GM12878 (cell line): ENCODE measurements at regions of chr4 and their contacts with region 1.

Region 1: DNA sequence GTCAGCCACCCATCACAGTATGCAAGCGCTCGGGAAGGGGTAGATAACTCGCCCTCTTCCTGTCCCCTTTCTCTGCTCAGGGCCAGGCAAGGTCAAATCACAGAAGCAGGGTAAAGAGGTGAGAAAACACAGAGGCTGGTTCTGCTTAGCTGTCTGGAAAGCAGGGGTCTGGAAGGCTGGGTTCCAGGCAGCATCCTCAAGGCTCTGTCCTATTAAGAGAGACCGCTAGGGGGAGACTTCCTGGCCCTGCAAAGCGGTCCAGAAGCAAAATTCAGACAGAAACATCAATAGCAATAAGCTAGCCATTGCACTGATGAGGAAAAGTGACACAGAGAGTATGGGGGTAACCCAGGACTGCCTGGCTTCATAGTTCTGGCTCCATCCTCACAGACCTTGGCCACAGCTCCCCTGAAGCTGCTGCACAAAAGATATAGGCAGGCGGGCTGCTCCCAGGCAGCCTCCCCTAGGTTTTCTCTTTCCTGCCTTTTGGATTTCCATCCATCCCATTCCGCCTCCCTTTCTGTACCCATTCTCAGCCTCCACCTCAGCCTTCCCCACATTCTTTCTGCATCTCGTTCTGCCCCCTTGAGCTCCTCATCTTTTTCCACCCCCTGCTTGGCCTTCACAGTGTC is 308.5 kb downstream of the EVC2 start:
- DNase-seq: no peak
- ATAC-seq: peak; percentile 70
- H3K4me3 ChIP-seq: no peak overlapping the region
- H3K27ac ChIP-seq: no peak overlapping the region
- H3K4me1 ChIP-seq: no peaks in the 10 kb centered on the region
- H3K27me3 ChIP-seq: no peaks in the 10 kb centered on the region
- CTCF ChIP-seq: peak; percentile 54 to 66 (median 62)
- EP300 ChIP-seq: no peak
- POLR2A ChIP-seq: no peak
- RAD21 ChIP-seq: peak; percentile 57

Region 2: GRCh38 chr4:4995103-4995907 is 404.6 kb before region 1 on chr4:
- CTCF ChIA-PET with region 1: no interaction called
- POLR2A ChIA-PET with region 1: no interaction called
- RAD21 ChIA-PET with region 1: no interaction called
- SMC1A ChIA-PET with region 1: no interaction called
- in situ Hi-C with region 1: no loop called
- intact Hi-C with region 1: loop called (anchors 10 kb)
- DNase-seq: no peak
- ATAC-seq: peak; percentile 94
- H3K4me3 ChIP-seq: no peak overlapping the region
- H3K27ac ChIP-seq: no peak overlapping the region
- H3K4me1 ChIP-seq: no peaks in the 10 kb centered on the region
- H3K27me3 ChIP-seq: no peaks in the 10 kb centered on the region
- CTCF ChIP-seq: peak; percentile 85 to 93 (median 91)
- EP300 ChIP-seq: no peak
- POLR2A ChIP-seq: no peak
- RAD21 ChIP-seq: peak; percentile 80

Region 3: DNA sequence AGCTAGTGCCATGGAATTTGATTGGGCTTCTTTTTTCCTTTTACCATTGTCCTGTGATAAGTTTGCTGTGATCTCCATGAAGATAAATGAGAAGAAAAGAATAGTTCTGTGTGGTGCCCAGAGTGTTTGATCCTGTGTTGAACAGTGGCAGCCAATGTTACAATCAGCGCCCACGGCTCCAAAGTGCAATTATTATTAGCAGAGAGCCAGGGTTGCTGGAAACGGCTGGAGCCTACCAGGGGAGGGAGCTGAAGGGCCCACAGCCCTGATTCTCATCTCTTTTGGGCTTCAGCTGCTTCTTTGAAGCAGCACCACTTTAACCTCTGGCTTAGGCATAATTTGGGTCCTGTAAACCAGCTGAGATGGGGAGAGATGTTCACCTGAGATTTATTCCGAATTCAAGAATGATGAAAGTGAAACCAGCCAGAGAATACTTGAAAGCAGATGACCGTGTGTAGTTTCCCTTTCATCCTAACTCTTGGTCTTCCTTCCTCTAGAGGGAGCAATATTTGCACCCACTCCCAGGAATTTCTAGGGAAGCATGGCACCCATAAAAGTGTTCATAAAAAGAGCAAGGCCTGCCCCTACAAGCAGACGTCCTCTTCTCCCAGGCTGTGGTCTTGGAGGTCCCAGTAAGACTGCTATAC is 10.2 kb after region 1 on chr4:
- CTCF ChIA-PET with region 1: interaction called, 10 read pairs
- POLR2A ChIA-PET with region 1: no interaction called
- RAD21 ChIA-PET with region 1: no interaction called
- SMC1A ChIA-PET with region 1: interaction called, 7 read pairs
- in situ Hi-C with region 1: no loop called
- intact Hi-C with region 1: no loop called
- DNase-seq: no peak
- ATAC-seq: no peak
- H3K4me3 ChIP-seq: no peak overlapping the region
- H3K27ac ChIP-seq: no peak overlapping the region
- H3K4me1 ChIP-seq: no peaks in the 10 kb centered on the region
- H3K27me3 ChIP-seq: no peaks in the 10 kb centered on the region
- CTCF ChIP-seq: no peak
- EP300 ChIP-seq: no peak
- POLR2A ChIP-seq: no peak
- RAD21 ChIP-seq: no peak

Region 4: GRCh38 chr4:5710961-5711478 is 311.1 kb after region 1 on chr4 and contains the start of gene EVC:
- CTCF ChIA-PET with region 1: interaction called, 3 read pairs
- POLR2A ChIA-PET with region 1: no interaction called
- RAD21 ChIA-PET with region 1: interaction called, 3 read pairs
- SMC1A ChIA-PET with region 1: no interaction called
- in situ Hi-C with region 1: no loop called
- intact Hi-C with region 1: loop called (anchors 10 kb)
- DNase-seq: no peak
- ATAC-seq: peak; percentile 58
- H3K4me3 ChIP-seq: peak within 1 kb of the TSS; percentile 72
- H3K27ac ChIP-seq: peak within 1 kb of the TSS; percentile 78
- H3K4me1 ChIP-seq: peaks cover 3% of the 10 kb centered on the region; the same call in 1 of the 2 replicates
- H3K27me3 ChIP-seq: no peaks in the 10 kb centered on the region
- CTCF ChIP-seq: 0 out of 6 replicates have a peak, but pooled peaks of 1 of the 3 experiments have one; percentile 1
- EP300 ChIP-seq: no peak
- POLR2A ChIP-seq: no peak
- RAD21 ChIP-seq: no peak
- polyA plus RNA-seq, gene EVC: 0.87 to 1.2 TPM

Region 5: GRCh38 chr4:5789141-5789540 is 389.2 kb after region 1 on chr4:
- CTCF ChIA-PET with region 1: interaction called, 13 read pairs
- POLR2A ChIA-PET with region 1: no interaction called
- RAD21 ChIA-PET with region 1: no interaction called
- SMC1A ChIA-PET with region 1: interaction called, 3 read pairs
- in situ Hi-C with region 1: loop called (anchors 10 kb)
- intact Hi-C with region 1: no loop called
- DNase-seq: no peak
- ATAC-seq: no peak
- H3K4me3 ChIP-seq: no peak overlapping the region
- H3K27ac ChIP-seq: no peak overlapping the region
- H3K4me1 ChIP-seq: no peaks in the 10 kb centered on the region
- H3K27me3 ChIP-seq: no peaks in the 10 kb centered on the region
- CTCF ChIP-seq: no peak
- EP300 ChIP-seq: no peak
- POLR2A ChIP-seq: no peak
- RAD21 ChIP-seq: no peak

Region 6: DNA sequence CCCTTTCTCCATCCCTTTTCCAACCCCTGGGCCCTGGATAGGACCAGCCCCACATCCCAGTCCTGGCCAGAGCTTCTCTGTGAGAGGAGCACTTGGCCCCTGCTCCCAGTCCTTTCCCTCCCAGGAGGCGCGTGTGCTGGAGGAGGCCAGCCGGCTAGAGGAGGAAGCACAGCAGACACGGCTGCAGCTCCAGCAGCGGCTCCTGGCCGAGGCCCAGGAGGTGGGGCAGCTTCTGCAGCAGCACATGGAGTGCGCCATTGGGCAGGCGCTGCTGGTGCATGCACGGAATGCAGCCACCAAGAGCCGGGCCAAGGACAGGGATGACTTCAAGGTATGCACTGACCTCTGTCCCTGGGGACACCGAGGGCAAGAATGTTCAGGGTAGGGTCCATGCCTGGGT is 398.6 kb after region 1 on chr4:
- CTCF ChIA-PET with region 1: no interaction called
- POLR2A ChIA-PET with region 1: no interaction called
- RAD21 ChIA-PET with region 1: no interaction called
- SMC1A ChIA-PET with region 1: no interaction called
- in situ Hi-C with region 1: loop called (anchors 10 kb)
- intact Hi-C with region 1: no loop called
- DNase-seq: no peak
- ATAC-seq: no peak
- H3K4me3 ChIP-seq: no peak overlapping the region
- H3K27ac ChIP-seq: no peak overlapping the region
- H3K4me1 ChIP-seq: no peaks in the 10 kb centered on the region
- H3K27me3 ChIP-seq: no peaks in the 10 kb centered on the region
- CTCF ChIP-seq: no peak
- EP300 ChIP-seq: no peak
- POLR2A ChIP-seq: no peak
- RAD21 ChIP-seq: no peak

Region 7: DNA sequence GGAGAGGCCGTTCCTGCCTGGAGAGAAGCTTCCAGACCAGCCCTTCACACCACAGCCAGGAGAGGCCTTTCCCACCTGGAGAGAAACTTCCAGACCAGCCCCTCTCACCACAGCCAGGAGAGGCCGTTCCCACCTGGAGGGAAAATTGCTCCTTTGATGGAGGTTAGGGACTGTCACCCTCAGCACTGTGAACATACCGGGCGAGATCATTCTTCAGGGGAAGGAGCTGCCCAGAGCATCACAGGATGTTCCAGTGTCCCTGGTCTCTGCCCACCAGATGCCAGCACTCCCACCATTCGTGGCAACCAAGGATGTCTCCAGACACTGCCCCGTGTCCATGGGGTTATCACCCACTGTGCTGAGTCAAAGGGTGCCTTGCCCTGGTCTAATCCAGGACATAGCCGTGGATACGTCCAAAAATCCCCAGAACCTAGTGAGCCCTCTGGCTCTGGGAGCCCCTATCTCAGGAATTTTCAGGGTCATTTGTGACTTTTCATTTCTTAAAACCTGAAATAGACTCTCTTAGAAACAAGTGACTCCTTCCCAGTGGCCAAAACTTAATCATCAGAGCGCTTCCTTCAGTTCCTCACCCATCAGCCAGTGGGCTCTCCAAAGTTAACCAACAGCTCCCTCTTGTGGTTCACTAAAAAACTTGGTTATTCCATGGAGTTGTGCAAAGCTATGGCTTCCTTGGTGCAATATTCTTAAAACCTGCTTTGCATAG is 412.8 kb after region 1 on chr4:
- CTCF ChIA-PET with region 1: interaction called, 3 read pairs
- POLR2A ChIA-PET with region 1: no interaction called
- RAD21 ChIA-PET with region 1: no interaction called
- SMC1A ChIA-PET with region 1: no interaction called
- in situ Hi-C with region 1: loop called (anchors 10 kb)
- intact Hi-C with region 1: loop called (anchors 2 kb)
- DNase-seq: no peak
- ATAC-seq: peak; percentile 92
- H3K4me3 ChIP-seq: no peak overlapping the region
- H3K27ac ChIP-seq: no peak overlapping the region
- H3K4me1 ChIP-seq: no peaks in the 10 kb centered on the region
- H3K27me3 ChIP-seq: no peaks in the 10 kb centered on the region
- CTCF ChIP-seq: peak; percentile 55 to 74 (median 69); a peak in 5 of 6 replicates
- EP300 ChIP-seq: no peak
- POLR2A ChIP-seq: no peak
- RAD21 ChIP-seq: peak; percentile 91